ENCODE measurements at regions of chr3 and their contacts with region 1.

Region 1: DNA sequence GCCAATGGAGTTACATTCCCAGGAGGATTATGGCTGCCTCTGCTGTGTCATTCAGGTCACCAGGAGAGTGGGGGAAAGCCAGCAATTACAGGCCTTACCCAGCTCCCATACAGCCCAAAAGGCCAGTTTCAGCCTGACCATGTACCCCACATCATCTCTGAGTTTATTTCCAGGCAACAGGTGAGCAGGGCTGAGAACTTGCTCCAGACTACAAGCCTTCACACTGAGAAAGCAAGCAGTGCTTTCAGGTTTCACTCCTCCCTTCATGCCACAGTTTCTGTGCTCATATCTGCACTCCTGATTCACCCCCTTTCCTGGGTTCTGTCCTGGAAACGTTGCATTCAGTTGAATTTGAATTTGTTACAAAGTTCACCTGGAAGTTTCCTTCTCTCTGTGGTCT is 68.1 kb upstream of the ABI3BP start:
- DNase-seq: no peak
- H3K4me3 ChIP-seq: no peak overlapping the region
- CTCF ChIP-seq: no peak

Region 2: DNA sequence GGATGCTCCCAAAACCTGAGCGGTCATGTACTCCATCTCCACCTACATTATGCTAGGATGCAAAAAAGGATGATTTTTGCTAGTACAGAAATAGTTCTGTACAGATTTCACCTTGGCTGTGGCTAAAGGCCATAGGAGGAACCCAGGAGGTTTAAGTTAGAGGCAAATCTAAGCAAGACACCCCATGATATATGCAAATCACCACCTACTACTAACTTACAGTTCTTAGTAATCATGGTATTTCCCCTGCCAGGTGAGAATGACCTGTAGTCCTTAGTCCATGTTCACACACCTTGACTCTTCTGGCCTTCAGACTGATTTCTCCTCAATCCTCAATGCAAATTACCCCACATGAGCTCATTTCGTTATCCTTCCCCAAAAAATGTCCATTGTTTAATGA is 104.8 kb after region 1 on chr3:
- in situ Hi-C with region 1: loop called (anchors 5 kb)
- DNase-seq: no peak
- H3K4me3 ChIP-seq: no peak overlapping the region
- CTCF ChIP-seq: no peak